PC-3 (cell line): ENCODE measurements at regions of chr7 and their contacts with region 1.

Region 1: GRCh38 chr7:142345811-142346210 is 88.0 kb upstream of the PRSS58 start:
- DNase-seq: no peak
- ATAC-seq: no peak
- H3K4me3 ChIP-seq: no peak overlapping the region
- H3K27ac ChIP-seq: no peak overlapping the region
- H3K4me1 ChIP-seq: peaks cover 10% of the 10 kb centered on the region
- H3K27me3 ChIP-seq: peaks cover 74% of the 10 kb centered on the region
- CTCF ChIP-seq: no peak

Region 2: GRCh38 chr7:142194201-142194600 is 151.6 kb before region 1 on chr7:
- CTCF ChIA-PET with region 1: interaction called, 4 read pairs
- POLR2A ChIA-PET with region 1: interaction called, 18 read pairs
- intact Hi-C with region 1: no loop called
- DNase-seq: peak; percentile 4
- ATAC-seq: no peak
- H3K4me3 ChIP-seq: no peak overlapping the region
- H3K27ac ChIP-seq: no peak overlapping the region
- H3K4me1 ChIP-seq: no peaks in the 10 kb centered on the region
- H3K27me3 ChIP-seq: peaks cover 39% of the 10 kb centered on the region
- CTCF ChIP-seq: no peak